WTC11 (cell line): ENCODE measurements at regions of chr9 and their contacts with region 1.

Region 1: DNA sequence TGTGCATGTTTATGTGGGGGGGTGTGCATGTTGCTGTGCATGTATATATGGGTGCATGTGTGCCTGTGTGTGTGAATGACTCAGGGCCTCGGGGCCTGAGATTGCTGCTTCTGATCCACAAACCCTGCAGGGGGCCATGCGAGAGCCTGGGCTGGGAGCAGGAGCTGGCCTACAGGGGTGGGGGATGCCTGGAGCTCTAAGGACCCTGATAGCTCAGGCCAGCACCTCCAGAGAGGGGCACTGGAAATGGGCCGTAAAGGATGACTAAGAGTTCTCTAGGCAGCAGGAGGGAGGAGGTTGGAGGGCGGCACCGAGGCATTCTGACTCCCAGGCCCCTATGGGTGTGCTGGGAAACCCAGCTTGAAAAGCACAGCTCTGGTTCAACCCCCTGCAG is 6.9 kb upstream of the UBAC1 start:
- DNase-seq: no peak
- ATAC-seq: no peak
- H3K4me3 Mint-ChIP-seq: no peak overlapping the region
- H3K27ac Mint-ChIP-seq: 0 out of 2 replicates have a peak overlapping the region, but pooled peaks have one; percentile 37
- H3K4me1 Mint-ChIP-seq: peaks cover 15% of the 10 kb centered on the region
- H3K27me3 Mint-ChIP-seq: no peaks in the 10 kb centered on the region
- CTCF ChIP-seq: no peak

Region 2: DNA sequence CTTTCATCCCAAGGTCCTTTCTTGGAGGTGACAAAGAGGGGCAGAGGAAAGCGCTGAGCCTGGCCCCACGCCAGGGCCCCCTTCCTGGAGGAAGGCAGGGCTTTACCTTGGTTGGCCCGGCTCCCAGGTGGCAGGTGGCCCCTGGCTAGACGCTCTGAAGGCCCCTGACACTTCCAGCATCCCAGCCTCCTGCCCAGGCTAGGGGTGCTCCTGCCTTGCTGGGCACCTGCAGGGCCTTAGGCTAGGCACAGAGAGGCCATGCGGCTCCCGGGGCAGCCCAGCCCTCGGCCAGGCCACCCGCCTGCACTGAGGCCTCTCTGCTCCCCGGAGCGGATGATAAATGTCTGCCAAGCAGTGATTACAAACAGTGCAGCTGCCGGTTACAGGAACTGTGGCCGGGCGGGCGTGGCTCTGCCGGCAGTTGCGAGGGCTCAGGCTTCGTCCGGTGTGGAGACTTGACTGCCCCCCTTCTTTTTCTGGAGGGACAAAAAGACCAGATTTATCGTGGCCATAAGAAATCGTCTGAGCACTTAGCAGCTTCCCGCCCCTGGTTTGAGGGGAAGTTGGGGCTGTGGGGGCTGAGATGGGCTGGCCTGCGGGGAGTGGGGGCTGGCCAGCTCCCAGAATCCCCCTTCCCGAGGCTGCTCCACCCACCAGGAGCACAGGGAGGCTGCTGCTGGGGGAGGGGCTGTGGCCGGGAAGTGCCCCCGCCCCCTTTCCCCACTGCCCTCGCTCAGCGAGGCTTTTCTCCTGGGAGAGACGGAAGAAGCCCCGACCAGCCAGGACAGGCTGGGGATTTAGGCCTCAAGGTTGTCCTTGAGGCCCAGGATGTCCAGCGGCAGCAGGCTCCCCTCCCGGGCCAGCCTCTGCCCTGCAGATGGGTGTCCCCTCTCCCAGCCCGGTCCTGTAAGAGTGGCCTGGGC is 24.7 kb after region 1 on chr9:
- CTCF ChIA-PET with region 1: interaction called, 13 read pairs
- POLR2A ChIA-PET with region 1: interaction called, 3 read pairs
- DNase-seq: peak; percentile 71
- ATAC-seq: peak; percentile 74
- H3K4me3 Mint-ChIP-seq: peak overlapping the region; percentile 53
- H3K27ac Mint-ChIP-seq: 0 out of 2 replicates have a peak overlapping the region, but pooled peaks have one; percentile 41
- H3K4me1 Mint-ChIP-seq: peaks cover 23% of the 10 kb centered on the region
- H3K27me3 Mint-ChIP-seq: no peaks in the 10 kb centered on the region
- CTCF ChIP-seq: no peak

Region 3: DNA sequence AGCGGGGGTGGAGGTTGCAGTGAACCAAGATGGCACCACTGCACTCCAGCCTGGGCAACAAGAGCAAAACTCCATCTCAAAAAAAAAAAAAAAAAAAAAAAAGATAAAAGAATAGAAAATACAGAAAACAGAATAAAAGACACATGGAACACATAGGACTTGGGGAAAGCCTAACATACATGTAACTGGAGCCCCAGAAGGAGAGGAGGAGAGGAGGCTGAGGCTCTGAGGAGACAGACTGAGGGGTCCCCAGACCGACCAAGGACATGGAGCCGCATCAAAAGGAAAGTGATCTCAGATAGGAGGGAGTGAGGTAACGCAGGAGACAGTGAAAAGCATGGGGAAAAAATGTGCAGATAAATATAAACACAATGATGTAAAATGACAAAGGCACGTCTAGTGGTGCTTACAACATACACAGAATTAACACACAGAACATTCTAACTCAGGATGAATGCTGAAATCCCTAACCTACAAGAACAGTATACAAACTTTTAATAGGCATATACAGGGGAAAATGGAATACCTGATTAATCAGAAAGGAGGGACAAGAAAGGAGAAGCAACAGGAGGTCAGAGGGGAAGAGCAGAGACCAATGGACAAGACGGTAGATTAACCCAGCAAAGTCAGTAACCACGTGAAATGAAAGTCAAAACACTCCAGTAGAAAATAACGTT is 58.3 kb after region 1 on chr9:
- CTCF ChIA-PET with region 1: no interaction called
- POLR2A ChIA-PET with region 1: no interaction called
- DNase-seq: no peak
- ATAC-seq: no peak
- H3K4me3 Mint-ChIP-seq: no peak overlapping the region
- H3K27ac Mint-ChIP-seq: no peak overlapping the region
- H3K4me1 Mint-ChIP-seq: peaks cover 9% of the 10 kb centered on the region
- H3K27me3 Mint-ChIP-seq: no peaks in the 10 kb centered on the region
- CTCF ChIP-seq: no peak

Region 4: GRCh38 chr9:136109351-136110081 is 141.4 kb after region 1 on chr9:
- CTCF ChIA-PET with region 1: interaction called, 12 read pairs
- POLR2A ChIA-PET with region 1: no interaction called
- DNase-seq: peak; percentile 80
- ATAC-seq: peak; percentile 74
- H3K4me3 Mint-ChIP-seq: peak overlapping the region; percentile 53
- H3K27ac Mint-ChIP-seq: no peak overlapping the region
- H3K4me1 Mint-ChIP-seq: peaks cover 51% of the 10 kb centered on the region
- H3K27me3 Mint-ChIP-seq: no peaks in the 10 kb centered on the region
- CTCF ChIP-seq: no peak

Region 5: GRCh38 chr9:136122425-136123383 is 154.6 kb after region 1 on chr9:
- CTCF ChIA-PET with region 1: interaction called, 30 read pairs
- POLR2A ChIA-PET with region 1: no interaction called
- DNase-seq: peak; percentile 84
- ATAC-seq: peak; percentile 11
- H3K4me3 Mint-ChIP-seq: no peak overlapping the region
- H3K27ac Mint-ChIP-seq: no peak overlapping the region
- H3K4me1 Mint-ChIP-seq: no peaks in the 10 kb centered on the region
- H3K27me3 Mint-ChIP-seq: no peaks in the 10 kb centered on the region
- CTCF ChIP-seq: peak; percentile 83

Region 6: GRCh38 chr9:136133191-136133958 is 165.3 kb after region 1 on chr9:
- CTCF ChIA-PET with region 1: interaction called, 28 read pairs
- POLR2A ChIA-PET with region 1: no interaction called
- DNase-seq: peak; percentile 79
- ATAC-seq: peak; percentile 84
- H3K4me3 Mint-ChIP-seq: peak overlapping the region; percentile 67
- H3K27ac Mint-ChIP-seq: no peak overlapping the region
- H3K4me1 Mint-ChIP-seq: peaks cover 14% of the 10 kb centered on the region
- H3K27me3 Mint-ChIP-seq: peaks cover 16% of the 10 kb centered on the region
- CTCF ChIP-seq: no peak